GM13976 (cell line): ENCODE measurements at regions of chr2 and their contacts with region 1.

Region 1: DNA sequence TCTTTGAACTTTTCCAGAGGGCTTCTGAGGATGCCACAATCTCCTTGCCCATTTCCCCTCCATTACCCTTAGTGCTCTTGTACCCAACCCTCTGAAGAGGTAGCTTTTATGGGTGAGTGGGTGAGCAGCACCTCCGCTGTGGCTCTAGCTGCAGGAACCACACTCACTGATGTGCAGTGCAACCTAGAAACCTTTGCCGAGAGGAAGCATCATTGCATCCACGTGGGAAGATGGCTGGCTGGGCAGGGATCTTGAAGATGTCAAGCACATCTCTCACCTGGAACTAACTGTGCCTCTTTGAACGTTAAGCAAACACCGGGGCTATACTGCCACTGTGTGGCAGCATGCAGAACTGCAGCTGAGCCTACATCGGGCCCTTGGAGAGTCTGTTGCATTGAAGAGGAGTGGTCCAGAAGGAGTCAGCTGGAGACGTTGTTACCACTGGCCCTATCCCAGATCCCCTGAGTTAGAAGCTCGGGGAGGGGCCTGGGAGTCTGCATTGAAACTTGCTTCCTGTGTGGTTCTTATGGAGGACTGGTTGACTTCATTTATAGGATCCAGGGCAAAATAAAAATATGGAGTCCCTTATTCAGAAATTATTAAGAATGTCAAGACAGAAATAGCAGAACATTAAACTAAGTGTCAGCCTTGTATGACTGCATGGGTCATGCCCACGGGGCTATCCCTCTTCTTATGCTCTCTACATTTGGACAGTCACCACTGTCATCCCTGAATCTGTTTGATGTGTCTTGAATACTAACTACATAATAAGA is 28.7 kb downstream of the IGFBP5 start:
- DNase-seq: peak; percentile 83
- CTCF ChIP-seq: peak; percentile 97

Region 2: GRCh38 chr2:216222650-216223352 is 443.8 kb before region 1 on chr2:
- in situ Hi-C with region 1: loop called (anchors 25 kb)
- DNase-seq: peak; percentile 42
- CTCF ChIP-seq: peak; percentile 60

Region 3: DNA sequence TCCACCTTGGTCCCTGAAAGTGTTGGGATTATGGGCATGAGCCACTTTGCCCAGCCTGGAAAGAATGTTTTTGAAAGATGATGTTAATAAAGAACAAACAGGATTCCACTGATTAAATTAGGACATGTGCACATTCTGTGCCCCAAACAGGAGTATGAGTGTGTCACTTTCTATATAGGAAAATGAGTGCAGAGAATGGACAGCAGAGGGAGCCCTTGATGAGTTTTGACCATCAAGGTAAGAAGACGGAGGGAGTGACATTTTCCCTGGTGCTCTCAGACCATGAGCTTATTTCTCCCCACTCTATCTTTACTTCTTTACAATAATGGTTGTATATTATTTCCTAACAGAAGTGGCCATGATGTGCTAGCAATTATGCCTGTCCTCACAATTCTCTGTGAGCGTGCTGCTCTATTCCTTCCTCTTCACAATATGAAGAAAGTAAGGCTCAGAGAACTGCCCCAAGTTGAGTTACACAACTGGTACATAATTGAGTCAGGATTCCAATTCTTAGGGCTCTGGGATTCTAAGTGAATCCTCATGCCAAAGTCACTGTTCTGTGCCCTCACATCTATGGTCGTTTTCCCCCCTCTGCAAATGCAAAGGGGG is 147.4 kb before region 1 on chr2:
- in situ Hi-C with region 1: loop called (anchors 5 kb)
- DNase-seq: peak; percentile 53
- CTCF ChIP-seq: peak; percentile 45

Region 4: GRCh38 chr2:216829533-216829932 is 162.9 kb after region 1 on chr2:
- in situ Hi-C with region 1: no loop called
- DNase-seq: no peak
- CTCF ChIP-seq: no peak